Endothelial cell of umbilical vein (primary cell): ENCODE measurements at regions of chr13 and their contacts with region 1.

Region 1: GRCh38 chr13:75219479-75220237 is 262.3 kb downstream of the TBC1D4 start:
- DNase-seq: peak; percentile 66
- H3K4me3 ChIP-seq: peak overlapping the region in 2 of 3 experiments; percentile 22 to 30
- H3K27ac ChIP-seq: no peak overlapping the region
- H3K4me1 ChIP-seq: peaks cover 3% of the 10 kb centered on the region
- H3K27me3 ChIP-seq: peaks cover 0 to 4% of the 10 kb centered on the region in 2 experiments
- CTCF ChIP-seq: peak; percentile 96
- POLR2A ChIP-seq: no peak

Region 2: GRCh38 chr13:73754727-73755292 is 1464.8 kb before region 1 on chr13:
- CTCF ChIA-PET with region 1: interaction called, 8 read pairs
- POLR2A ChIA-PET with region 1: no interaction called
- dilution Hi-C with region 1: no loop called
- intact Hi-C with region 1: loop called (anchors 1 kb)
- DNase-seq: peak; percentile 79
- H3K4me3 ChIP-seq: no peak overlapping the region
- H3K27ac ChIP-seq: no peak overlapping the region
- H3K4me1 ChIP-seq: no peaks in the 10 kb centered on the region
- H3K27me3 ChIP-seq: no peaks in the 10 kb centered on the region
- CTCF ChIP-seq: peak; percentile 36 to 51
- POLR2A ChIP-seq: no peak

Region 3: DNA sequence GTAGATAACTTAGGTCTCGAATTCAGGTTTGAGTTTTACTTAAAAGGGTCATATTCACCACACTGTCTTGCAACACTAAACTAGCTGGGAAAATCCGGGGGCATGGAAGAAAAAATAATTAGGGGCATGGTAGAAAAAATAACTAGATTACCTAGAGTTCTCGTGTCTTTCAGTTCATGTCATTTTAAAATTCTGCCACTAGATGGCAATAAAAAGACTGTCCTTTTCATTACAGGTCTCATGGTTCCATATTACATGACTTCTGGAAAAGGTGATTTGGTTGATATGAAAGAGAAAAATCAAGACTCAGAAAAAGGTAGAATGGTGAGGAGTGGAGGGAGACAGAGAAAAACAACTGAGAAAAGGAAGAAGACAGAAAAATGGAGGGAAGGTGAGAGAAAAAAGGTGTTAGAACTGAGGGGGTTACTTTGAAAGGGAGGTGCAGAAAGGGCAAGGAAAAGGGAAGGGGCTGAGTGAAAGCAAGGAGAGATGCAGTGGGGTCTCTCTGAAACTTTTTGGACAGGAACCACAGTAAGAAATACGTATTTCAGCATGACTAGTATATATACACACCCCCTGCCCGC is 1384.4 kb before region 1 on chr13:
- CTCF ChIA-PET with region 1: interaction called, 16 read pairs
- POLR2A ChIA-PET with region 1: no interaction called
- dilution Hi-C with region 1: no loop called
- intact Hi-C with region 1: loop called (anchors 1 kb)
- DNase-seq: peak; percentile 55
- H3K4me3 ChIP-seq: no peak overlapping the region
- H3K27ac ChIP-seq: no peak overlapping the region
- H3K4me1 ChIP-seq: peaks cover 4% of the 10 kb centered on the region
- H3K27me3 ChIP-seq: no peaks in the 10 kb centered on the region
- CTCF ChIP-seq: peak; percentile 27 to 37
- POLR2A ChIP-seq: no peak

Region 4: DNA sequence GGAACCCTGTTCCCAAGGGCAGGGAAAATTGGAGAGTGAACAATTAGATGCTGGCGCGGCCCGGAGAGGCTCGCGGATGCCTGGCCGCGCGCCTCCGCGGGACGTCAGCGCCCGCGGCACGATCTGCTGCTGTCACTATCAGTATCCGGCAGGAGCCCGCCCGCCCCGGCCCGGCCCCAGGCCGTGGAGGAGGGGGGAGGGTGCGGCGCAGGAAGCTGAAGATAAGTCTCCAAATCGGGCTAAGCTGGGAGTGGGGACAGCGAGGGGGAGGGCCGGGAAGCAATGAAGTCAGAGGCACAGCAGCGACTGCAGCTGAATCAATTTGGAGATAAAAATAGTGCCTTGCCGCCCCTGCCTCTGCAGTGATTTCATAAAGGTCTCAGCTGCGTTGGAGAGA is 643.9 kb before region 1 on chr13:
- CTCF ChIA-PET with region 1: interaction called, 29 read pairs
- POLR2A ChIA-PET with region 1: no interaction called
- dilution Hi-C with region 1: no loop called
- intact Hi-C with region 1: loop called (anchors 1 kb)
- DNase-seq: peak; percentile 62
- H3K4me3 ChIP-seq: peak overlapping the region; percentile 14 to 21 (median 19)
- H3K27ac ChIP-seq: no peak overlapping the region
- H3K4me1 ChIP-seq: peaks cover 6% of the 10 kb centered on the region
- H3K27me3 ChIP-seq: peaks cover 0 to 2% of the 10 kb centered on the region in 2 experiments
- CTCF ChIP-seq: no peak
- POLR2A ChIP-seq: no peak

Region 5: DNA sequence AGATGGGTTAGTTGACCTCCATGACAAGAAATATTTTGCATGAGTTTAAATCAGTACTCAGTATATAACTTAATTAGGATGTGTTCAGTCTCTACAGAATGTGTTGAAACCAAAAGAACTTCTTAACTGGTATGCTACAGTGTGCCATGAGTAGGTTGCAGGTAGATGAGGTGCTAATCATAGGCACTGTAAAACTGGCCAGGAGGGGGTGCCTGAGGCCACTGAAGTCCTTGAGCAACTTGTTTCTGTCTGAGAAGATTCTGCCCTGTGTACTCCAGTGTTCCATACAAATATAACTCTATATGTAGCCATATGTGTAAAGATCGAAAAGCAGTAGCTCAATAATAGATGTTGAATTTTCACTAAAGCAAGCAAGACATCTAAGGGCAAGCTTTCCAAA is 536.2 kb before region 1 on chr13:
- CTCF ChIA-PET with region 1: interaction called, 11 read pairs
- POLR2A ChIA-PET with region 1: no interaction called
- dilution Hi-C with region 1: no loop called
- intact Hi-C with region 1: loop called (anchors 1 kb)
- DNase-seq: peak; percentile 19
- H3K4me3 ChIP-seq: no peak overlapping the region
- H3K27ac ChIP-seq: no peak overlapping the region
- H3K4me1 ChIP-seq: peaks cover 4% of the 10 kb centered on the region
- H3K27me3 ChIP-seq: no peaks in the 10 kb centered on the region
- CTCF ChIP-seq: no peak
- POLR2A ChIP-seq: no peak

Region 6: DNA sequence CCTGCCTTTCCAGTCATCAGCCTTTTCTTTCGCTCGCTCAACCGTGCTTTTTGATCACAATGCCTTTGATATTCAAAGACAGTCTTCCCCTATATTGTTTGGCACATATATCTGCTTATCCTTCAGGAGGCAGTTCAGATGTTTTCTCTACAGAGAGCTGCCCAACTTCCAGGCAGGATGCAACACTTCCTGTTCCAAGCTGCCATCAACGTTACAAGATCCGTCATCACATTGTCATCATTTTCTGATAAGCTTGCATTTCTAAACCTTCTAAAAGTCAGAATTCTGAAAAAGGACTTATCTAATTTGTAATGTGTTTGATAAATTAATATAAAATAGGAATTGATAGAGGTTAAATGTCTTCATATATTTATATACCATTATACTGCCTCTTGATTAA is 311.9 kb before region 1 on chr13:
- CTCF ChIA-PET with region 1: interaction called, 5 read pairs
- POLR2A ChIA-PET with region 1: no interaction called
- dilution Hi-C with region 1: no loop called
- intact Hi-C with region 1: loop called (anchors 10 kb)
- DNase-seq: peak; percentile 68
- H3K4me3 ChIP-seq: no peak overlapping the region
- H3K27ac ChIP-seq: peak overlapping the region; percentile 45
- H3K4me1 ChIP-seq: peaks cover 23% of the 10 kb centered on the region
- H3K27me3 ChIP-seq: no peaks in the 10 kb centered on the region
- CTCF ChIP-seq: no peak
- POLR2A ChIP-seq: no peak

Region 7: DNA sequence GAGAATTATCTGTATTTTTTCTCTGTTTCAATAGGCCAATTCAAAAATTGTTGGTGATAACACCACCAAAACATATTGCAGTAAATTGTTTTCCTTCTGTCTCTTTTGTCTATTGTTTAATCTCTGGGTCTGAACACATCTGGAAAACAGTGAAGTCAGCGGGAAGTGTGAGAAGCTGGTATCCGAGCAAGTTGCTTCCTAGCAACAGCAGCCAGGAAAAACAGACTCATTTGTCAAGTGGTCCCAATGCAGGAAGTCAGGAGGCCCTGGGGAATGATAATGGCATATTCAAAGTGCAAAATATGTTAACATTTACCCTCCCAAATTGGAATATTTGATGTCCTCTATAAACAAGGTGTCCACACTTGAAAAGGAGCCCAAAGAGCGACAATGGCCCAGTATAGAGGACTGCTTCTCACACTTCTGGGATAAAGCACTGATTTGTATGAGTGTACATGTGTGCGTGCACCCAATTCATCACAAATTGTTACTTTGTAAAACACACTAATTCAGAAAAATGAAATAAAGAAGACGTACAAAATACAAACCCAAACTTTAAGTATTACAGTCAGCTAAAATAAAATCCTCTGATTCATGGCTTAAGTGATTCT is 252.7 kb before region 1 on chr13:
- CTCF ChIA-PET with region 1: interaction called, 4 read pairs
- POLR2A ChIA-PET with region 1: no interaction called
- dilution Hi-C with region 1: no loop called
- intact Hi-C with region 1: loop called (anchors 5 kb)
- DNase-seq: peak; percentile 84
- H3K4me3 ChIP-seq: no peak overlapping the region
- H3K27ac ChIP-seq: no peak overlapping the region
- H3K4me1 ChIP-seq: peaks cover 9% of the 10 kb centered on the region
- H3K27me3 ChIP-seq: peaks cover 5 to 10% of the 10 kb centered on the region in 2 experiments
- CTCF ChIP-seq: no peak
- POLR2A ChIP-seq: no peak

Region 8: DNA sequence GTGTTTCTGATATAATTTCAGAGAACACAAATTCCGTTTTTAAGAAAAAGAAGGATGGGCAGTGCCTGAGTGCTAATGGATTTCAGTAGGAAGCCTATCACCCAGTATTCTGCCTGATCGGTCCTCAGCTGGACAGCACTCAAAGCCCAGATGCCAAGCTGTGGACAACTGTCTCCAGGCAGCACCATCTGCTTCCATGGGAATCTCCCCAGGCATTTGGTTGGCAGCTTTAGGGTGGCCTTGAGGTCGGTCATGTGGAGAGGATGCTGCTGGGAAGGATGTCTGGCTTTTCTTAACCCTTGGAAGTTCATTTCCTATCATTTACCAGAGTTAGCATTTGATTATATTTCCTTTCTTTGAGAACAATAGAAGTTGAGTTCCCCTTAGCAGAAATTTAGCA is 49.3 kb before region 1 on chr13:
- CTCF ChIA-PET with region 1: no interaction called
- POLR2A ChIA-PET with region 1: no interaction called
- dilution Hi-C with region 1: no loop called
- intact Hi-C with region 1: no loop called
- DNase-seq: peak; percentile 42
- H3K4me3 ChIP-seq: no peak overlapping the region
- H3K27ac ChIP-seq: no peak overlapping the region
- H3K4me1 ChIP-seq: peaks cover 2% of the 10 kb centered on the region
- H3K27me3 ChIP-seq: no peaks in the 10 kb centered on the region
- CTCF ChIP-seq: no peak
- POLR2A ChIP-seq: no peak

Region 9: GRCh38 chr13:75326173-75327134 is 106.8 kb after region 1 on chr13:
- CTCF ChIA-PET with region 1: no interaction called
- POLR2A ChIA-PET with region 1: no interaction called
- dilution Hi-C with region 1: no loop called
- intact Hi-C with region 1: no loop called
- DNase-seq: peak; percentile 87
- H3K4me3 ChIP-seq: peak overlapping the region in 2 of 3 experiments; percentile 24 to 44
- H3K27ac ChIP-seq: peak overlapping the region; percentile 82
- H3K4me1 ChIP-seq: peaks cover 53% of the 10 kb centered on the region
- H3K27me3 ChIP-seq: no peaks in the 10 kb centered on the region
- CTCF ChIP-seq: no peak
- POLR2A ChIP-seq: no peak